Heart left ventricle (tissue), 16 donors: ENCODE measurements at regions of chr15 and their contacts with region 1.

Region 1: DNA sequence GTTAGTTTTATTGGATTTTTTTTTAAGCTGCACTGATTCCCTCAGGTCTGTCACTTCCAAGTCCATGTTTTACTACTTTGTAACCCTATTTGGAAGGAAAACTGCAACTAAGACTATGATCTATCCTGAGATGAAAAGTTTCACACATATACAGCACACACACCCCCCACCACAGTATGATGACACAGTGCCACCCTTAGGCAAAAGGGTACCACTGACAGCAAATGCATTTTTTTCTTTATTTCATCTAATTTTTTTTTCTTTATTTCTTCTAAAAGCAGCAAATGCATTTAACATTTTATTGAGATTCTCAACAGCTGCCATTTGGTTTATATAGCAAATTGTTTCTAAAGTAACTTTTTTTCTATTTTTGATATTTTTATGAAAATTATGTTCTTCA is 21.2 kb downstream of the NGRN start:
- DNase-seq: no peak
- ATAC-seq: no peak
- H3K4me3 ChIP-seq: no peak overlapping the region
- H3K27ac ChIP-seq: no peak overlapping the region
- H3K4me1 ChIP-seq: peaks cover 0 to 10% (median 0%) of the 10 kb centered on the region in 12 donors
- H3K27me3 ChIP-seq: no peaks in the 10 kb centered on the region
- CTCF ChIP-seq: peak in 8 of 12 donors; percentile 22 to 45 (median 34)
- POLR2A ChIP-seq: no peak

Region 2: DNA sequence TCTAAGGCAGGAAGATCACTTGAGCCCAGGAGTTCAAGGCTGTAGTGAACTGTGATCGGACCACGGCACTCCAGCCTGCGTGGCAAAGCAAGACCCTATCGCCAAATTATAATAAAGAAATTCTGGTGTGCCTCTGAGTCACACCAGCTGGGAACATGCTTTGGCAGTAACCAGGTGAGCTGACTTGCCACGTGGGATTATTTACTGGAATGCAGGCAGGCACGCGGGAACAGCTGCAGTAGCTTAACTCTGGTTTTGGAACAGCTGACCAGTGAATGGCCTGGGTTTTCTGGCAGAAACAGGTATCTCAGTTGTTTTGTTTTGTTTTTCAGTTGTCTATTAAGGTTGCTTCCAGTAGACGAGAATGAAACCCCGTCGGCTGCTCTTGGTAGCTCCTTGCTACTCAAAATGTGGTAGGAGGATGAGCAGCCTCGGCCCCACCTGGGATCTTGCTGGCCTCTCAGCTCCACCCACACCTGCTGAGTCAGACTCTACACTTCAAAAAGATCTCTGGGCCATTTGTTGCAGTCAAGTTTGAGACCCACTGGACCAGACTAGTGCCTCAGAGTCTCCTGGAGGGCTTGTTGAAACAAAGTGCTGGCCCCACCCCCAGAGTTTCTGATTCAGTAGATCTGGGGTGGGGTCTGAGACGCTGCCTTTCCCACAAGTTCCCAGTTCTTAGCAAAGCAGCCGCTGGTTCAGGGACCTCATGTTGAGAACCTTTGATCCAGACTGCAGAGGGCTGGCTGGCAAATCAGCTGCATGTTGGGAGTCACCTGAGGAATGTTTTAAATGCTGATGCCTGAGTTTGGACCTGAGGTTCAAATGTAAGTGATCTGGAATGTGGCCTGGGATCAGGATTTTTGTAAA is 211.0 kb before region 1 on chr15:
- intact Hi-C with region 1: no loop called
- DNase-seq: no peak
- ATAC-seq: no peak
- H3K4me3 ChIP-seq: no peak overlapping the region
- H3K27ac ChIP-seq: peak overlapping the region in 3 of 12 donors; percentile 23 to 49 (median 33)
- H3K4me1 ChIP-seq: peaks cover 0 to 11% (median 4%) of the 10 kb centered on the region in 12 donors
- H3K27me3 ChIP-seq: no peaks in the 10 kb centered on the region
- CTCF ChIP-seq: no peak
- POLR2A ChIP-seq: no peak

Region 3: DNA sequence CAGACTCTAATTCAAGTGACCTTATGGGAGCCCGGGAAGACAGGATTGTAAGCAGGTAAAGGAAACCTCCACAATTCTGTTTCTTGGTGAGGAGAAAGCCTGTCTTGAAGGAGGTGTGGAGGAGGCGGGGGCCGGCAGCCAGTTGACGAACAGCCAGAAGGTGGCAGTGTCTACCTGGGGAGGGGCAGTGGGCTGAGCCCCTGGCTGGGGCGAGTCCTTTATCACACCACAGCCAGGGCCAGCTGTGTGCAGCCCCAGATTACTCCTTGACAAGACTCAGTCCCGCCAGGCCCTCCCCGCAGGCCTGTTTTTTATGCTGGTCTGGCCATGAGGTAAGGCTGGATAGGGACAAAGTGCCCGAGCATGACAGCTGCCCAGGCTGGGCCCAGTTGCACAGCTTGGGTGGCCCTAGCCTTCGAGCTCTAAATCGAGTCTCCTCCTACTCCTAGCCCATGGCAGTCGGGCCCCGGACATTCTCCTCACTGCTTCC is 143.5 kb before region 1 on chr15:
- intact Hi-C with region 1: loop called in 1 of 10 experiments (anchors 10 kb)
- DNase-seq: peak; percentile 42 to 69 (median 52)
- ATAC-seq: peak; percentile 58 to 86 (median 80)
- H3K4me3 ChIP-seq: no peak overlapping the region
- H3K27ac ChIP-seq: peak overlapping the region in 10 of 12 donors; percentile 24 to 71 (median 35)
- H3K4me1 ChIP-seq: peaks cover 0 to 12% (median 4%) of the 10 kb centered on the region in 12 donors
- H3K27me3 ChIP-seq: no peaks in the 10 kb centered on the region
- CTCF ChIP-seq: peak; percentile 30 to 70 (median 54)
- POLR2A ChIP-seq: no peak

Region 4: GRCh38 chr15:90557186-90558084 is 270.8 kb after region 1 on chr15:
- intact Hi-C with region 1: no loop called
- DNase-seq: peak; percentile 83 to 96 (median 89)
- ATAC-seq: peak; percentile 82 to 89 (median 86)
- H3K4me3 ChIP-seq: peak overlapping the region in 3 of 12 donors; percentile 11 to 17 (median 14)
- H3K27ac ChIP-seq: peak overlapping the region; percentile 75 to 91 (median 84)
- H3K4me1 ChIP-seq: peaks cover 8 to 93% (median 81%) of the 10 kb centered on the region in 12 donors
- H3K27me3 ChIP-seq: no peaks in the 10 kb centered on the region
- CTCF ChIP-seq: peak in 1 of 12 donors; percentile 5
- POLR2A ChIP-seq: peak in 1 of 2 donors; percentile 15